ENCODE measurements at regions of chr19 and their contacts with region 1.

Region 1: DNA sequence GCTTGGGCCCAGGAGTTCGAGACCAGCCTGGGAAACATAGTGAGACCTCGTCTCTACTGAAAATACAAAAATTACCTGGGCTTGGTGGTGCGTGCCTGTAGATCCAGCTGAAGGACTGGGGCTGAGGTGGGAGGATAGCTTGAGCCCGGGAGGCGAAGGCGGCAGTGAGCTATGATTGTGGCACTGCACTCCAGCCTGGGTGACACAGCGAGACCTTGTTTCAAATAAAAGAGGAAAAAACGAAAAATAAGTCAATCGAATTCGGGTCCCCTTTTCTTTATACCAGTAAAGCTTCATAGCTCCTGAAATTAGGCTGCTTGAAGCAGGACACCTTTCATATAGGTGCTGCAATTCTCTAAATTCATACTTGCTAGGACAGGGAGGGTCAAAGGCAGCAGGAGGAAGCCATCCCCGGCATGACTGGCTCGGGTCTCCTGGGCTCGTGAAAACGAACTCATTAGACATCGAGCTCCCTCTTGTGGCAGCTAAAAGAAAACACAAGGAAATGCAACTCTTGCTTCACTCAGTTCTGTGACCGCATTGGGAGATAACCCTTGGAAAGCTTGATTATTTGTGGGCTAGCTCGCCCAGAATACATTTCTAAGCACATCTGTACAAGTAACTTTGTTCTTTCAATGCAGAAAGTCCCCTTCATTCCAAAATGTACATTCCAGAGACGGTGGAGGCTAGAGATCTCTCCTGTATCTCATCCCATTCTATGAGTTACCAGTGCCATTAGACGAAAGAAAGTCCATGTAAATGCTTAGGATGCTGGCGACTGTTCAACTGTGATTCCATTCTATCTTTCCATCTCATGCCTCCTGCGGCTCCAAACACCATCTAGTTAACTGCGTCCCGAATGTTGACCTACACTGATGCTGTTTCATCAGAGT is 16.8 kb downstream of the FPR2 start:
- DNase-seq: peak; percentile 82
- H3K4me3 ChIP-seq: no peak overlapping the region
- H3K27ac ChIP-seq: no peak overlapping the region
- H3K4me1 ChIP-seq: no peaks in the 10 kb centered on the region
- H3K27me3 ChIP-seq: peaks cover 76% of the 10 kb centered on the region
- CTCF ChIP-seq: peak; percentile 75

Region 2: DNA sequence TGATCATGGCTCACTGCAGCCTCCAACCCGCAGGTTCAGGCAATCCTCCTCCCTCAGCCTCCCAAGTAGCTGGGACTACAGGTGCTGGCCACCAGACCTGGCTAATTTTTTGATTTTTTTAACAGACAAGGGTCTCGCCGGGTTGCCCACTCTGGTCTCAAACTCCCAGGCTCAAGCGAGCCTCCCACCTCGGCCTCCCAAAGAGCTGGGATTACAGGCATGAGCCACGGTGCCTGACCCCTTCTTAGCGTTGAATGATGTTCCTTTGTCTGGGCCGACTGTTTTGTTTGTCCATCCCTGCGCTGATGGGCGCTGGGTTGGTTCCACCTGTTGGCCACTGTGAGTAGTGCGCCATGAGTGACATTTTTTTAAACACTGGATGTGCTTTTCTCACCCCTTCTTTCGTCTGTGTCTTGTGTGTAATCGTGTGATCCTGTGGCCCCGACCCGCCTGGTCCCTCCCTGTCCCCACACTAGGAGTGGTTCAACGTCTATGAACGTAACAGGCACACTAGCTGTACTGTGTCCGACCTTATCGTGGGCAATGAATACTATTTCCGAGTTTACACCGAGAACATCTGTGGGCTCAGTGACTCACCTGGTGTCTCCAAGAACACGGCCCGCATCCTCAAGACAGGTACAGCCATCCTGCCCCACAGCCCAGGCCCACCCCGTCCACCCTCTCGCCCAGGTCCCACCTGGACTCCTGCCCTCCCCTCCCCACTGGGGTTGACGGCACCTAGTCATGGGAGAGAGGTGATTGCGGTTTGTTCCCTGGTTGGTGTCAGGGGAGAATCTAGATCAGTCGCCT is 1316.5 kb before region 1 on chr19:
- CTCF ChIA-PET with region 1: interaction called, 16 read pairs
- POLR2A ChIA-PET with region 1: no interaction called
- intact Hi-C with region 1: no loop called
- DNase-seq: peak; percentile 75
- H3K4me3 ChIP-seq: no peak overlapping the region
- H3K27ac ChIP-seq: no peak overlapping the region
- H3K4me1 ChIP-seq: peaks cover 5% of the 10 kb centered on the region
- H3K27me3 ChIP-seq: peaks cover 4% of the 10 kb centered on the region
- CTCF ChIP-seq: peak; percentile 86

Region 3: DNA sequence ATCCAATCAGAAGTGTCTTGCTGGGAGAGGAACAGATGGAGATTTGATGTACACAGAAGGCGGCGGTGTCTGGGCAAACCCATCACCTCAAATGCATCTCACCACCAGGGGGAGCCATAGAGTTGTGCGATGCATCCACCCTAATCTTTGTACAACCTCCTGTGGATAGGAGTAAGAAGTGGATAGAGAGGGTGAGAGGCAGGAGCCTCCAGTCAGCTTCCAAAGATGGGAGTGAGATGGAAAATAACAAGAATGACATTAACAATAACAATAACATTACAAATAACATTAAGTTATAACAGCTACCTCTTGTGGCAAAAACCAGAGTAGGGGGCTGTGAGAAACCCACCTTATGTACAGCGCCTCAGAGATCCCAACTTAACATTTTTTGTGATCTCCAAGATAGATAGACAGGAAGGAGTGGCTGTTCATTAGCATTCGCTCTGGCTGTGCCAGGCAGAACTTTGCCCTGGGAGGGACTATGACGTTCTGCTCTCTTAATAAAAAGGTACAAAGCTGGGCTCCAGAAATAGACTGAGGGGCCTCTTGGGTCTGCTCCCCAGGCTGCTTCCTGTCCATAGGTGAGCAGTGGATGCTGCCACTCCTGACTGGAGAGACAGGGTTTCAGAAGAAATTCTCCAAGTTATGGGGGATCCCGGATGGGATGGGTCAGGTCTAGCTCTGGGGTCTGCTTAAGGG is 304.7 kb before region 1 on chr19:
- CTCF ChIA-PET with region 1: no interaction called
- POLR2A ChIA-PET with region 1: no interaction called
- intact Hi-C with region 1: loop called (anchors 5 kb)
- DNase-seq: peak; percentile 81
- H3K4me3 ChIP-seq: no peak overlapping the region
- H3K27ac ChIP-seq: no peak overlapping the region
- H3K4me1 ChIP-seq: no peaks in the 10 kb centered on the region
- H3K27me3 ChIP-seq: peaks cover 59% of the 10 kb centered on the region
- CTCF ChIP-seq: peak; percentile 83

Region 4: GRCh38 chr19:51552996-51553725 is 224.7 kb before region 1 on chr19:
- CTCF ChIA-PET with region 1: no interaction called
- POLR2A ChIA-PET with region 1: no interaction called
- intact Hi-C with region 1: no loop called
- DNase-seq: peak; percentile 84
- H3K4me3 ChIP-seq: no peak overlapping the region
- H3K27ac ChIP-seq: no peak overlapping the region
- H3K4me1 ChIP-seq: no peaks in the 10 kb centered on the region
- H3K27me3 ChIP-seq: peaks cover 30% of the 10 kb centered on the region
- CTCF ChIP-seq: no peak

Region 5: GRCh38 chr19:51607920-51608562 is 169.8 kb before region 1 on chr19:
- CTCF ChIA-PET with region 1: no interaction called
- POLR2A ChIA-PET with region 1: no interaction called
- intact Hi-C with region 1: loop called (anchors 5 kb)
- DNase-seq: peak; percentile 83
- H3K4me3 ChIP-seq: no peak overlapping the region
- H3K27ac ChIP-seq: no peak overlapping the region
- H3K4me1 ChIP-seq: no peaks in the 10 kb centered on the region
- H3K27me3 ChIP-seq: no peaks in the 10 kb centered on the region
- CTCF ChIP-seq: peak; percentile 90

Region 6: GRCh38 chr19:51807111-51807701 is 29.4 kb after region 1 on chr19:
- CTCF ChIA-PET with region 1: interaction called, 15 read pairs
- POLR2A ChIA-PET with region 1: no interaction called
- intact Hi-C with region 1: no loop called
- DNase-seq: peak; percentile 85
- H3K4me3 ChIP-seq: no peak overlapping the region
- H3K27ac ChIP-seq: no peak overlapping the region
- H3K4me1 ChIP-seq: peaks cover 27% of the 10 kb centered on the region
- H3K27me3 ChIP-seq: no peaks in the 10 kb centered on the region
- CTCF ChIP-seq: no peak